A549 (cell line): ENCODE measurements at regions of chr1 and their contacts with region 1.

Region 1: GRCh38 chr1:151340870-151341754 is 5.9 kb downstream of the RFX5 start:
- DNase-seq: peak; percentile 60 to 84
- ATAC-seq: peak; percentile 87 to 93
- H3K4me3 ChIP-seq: no peak overlapping the region
- H3K27ac ChIP-seq: no peak overlapping the region
- H3K4me1 ChIP-seq: peaks cover 9% of the 10 kb centered on the region
- CTCF ChIP-seq: peak; percentile 87
- EP300 ChIP-seq: no peak
- POLR2A ChIP-seq: no peak
- RAD21 ChIP-seq: peak; percentile 84 to 87

Region 2: DNA sequence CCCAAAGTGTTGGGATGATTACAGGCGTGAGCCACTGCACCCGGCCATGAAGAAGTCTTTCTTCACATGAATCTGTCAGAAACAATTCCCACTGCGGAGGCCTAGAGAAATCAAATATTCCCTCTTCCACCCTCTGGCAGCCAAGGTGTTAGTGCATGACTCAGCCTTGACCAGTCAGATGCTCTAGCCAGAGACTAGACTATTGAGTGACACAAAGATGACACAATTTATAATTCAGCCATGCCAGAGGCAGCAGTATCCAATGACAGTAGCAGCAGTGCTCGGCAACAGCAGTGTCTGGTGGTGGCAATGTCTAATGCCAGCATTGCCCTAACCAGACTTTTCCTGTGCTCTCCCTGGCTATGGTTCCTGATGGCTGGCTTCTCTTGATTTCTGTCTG is 445.5 kb before region 1 on chr1:
- CTCF ChIA-PET with region 1: no interaction called
- POLR2A ChIA-PET with region 1: no interaction called
- DNase-seq: peak; percentile 56 to 61
- ATAC-seq: peak; percentile 92 to 100
- H3K4me3 ChIP-seq: no peak overlapping the region
- H3K27ac ChIP-seq: peak overlapping the region in 1 of 2 experiments; percentile 15; a peak in 1 of 6 replicates
- H3K4me1 ChIP-seq: peaks cover 9% of the 10 kb centered on the region
- CTCF ChIP-seq: no peak
- EP300 ChIP-seq: no peak
- POLR2A ChIP-seq: no peak
- RAD21 ChIP-seq: no peak

Region 3: DNA sequence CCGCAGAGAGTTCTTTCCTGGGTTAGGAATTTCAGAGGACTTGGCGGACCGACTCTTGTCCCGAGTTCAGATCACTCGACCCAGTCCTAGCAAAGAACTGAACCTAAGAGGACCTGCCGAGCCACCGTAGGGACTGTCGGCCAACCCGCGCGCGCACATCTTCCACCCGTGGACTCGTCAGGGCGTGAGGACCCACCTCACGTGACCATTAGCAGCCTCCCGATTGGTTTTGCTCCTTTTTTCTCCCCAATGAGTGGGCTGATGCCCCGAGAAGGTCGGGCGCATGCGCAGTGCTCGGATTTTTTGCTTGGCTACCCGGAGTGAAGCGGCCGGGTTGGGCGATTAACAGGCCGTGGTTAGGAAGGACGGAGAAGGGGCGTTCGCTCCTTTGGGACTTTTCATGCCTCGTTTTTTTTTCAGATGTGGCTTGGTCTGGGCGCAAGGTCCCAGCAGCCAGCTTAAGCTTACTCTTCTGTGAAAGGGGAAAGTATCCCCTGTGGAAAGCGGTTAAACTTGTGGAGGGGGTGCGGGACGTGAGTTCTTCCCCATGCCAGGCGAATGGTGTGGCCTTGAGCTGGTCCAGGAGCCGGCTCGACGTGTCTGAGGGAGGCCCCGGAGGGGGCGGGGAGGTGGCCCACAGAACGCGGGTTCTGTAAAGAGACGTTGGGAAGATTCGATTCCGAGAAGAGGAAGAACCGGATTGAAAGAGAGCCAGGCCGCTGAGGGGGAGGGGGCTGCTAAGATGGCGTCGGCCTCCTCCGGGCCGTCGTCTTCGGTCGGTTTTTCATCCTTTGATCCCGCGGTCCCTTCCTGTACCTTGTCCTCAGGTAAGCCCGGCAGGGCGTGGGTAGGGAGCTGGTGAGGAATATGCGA is 142.6 kb before region 1 on chr1 and contains the start of gene PIP5K1A:
- CTCF ChIA-PET with region 1: interaction called, 20 read pairs
- POLR2A ChIA-PET with region 1: no interaction called
- DNase-seq: peak; percentile 98 to 99
- ATAC-seq: peak; percentile 79 to 81
- H3K4me3 ChIP-seq: peak within 1 kb of the TSS; percentile 78
- H3K27ac ChIP-seq: peak within 1 kb of the TSS; percentile 95
- H3K4me1 ChIP-seq: peaks cover 30% of the 10 kb centered on the region
- CTCF ChIP-seq: no peak
- EP300 ChIP-seq: no peak
- POLR2A ChIP-seq: peak; percentile 72
- RAD21 ChIP-seq: no peak
- polyA plus RNA-seq, gene PIP5K1A: 129 and 183 TPM in 2 replicates

Region 4: DNA sequence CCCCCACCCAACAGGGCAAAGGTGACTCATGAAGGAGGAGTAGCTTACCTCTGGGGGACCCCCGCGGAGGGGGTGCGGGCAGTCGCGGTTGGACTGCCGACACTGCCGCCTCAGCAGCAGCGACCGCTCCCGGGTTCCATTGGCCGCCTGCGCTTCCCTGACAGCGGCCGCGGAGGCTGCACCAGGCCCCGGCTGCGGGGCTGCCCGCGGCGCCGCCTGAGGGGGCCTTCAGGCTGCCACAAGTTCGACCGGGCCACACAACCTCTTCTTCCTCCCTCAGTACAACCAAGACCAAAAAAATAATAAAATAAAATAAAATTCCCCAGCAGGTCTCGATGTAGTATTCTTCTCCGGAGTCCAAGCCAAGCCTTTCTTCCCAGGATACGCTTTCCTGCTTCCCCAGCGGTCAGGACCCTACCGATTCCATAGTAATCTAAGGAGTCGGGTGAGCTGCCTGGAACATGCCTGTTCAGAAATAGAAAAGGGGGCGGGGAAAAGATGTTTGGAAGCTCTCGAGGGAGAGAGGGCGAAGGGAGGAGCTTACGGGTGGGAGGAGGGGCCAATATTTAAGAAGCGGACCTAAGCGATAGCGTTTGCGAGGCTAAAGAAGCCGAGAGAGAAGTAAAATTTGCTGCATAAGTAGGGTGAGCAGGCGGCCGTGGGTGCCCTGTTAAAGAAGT is 13.7 kb before region 1 on chr1 and contains the start of gene PI4KB:
- CTCF ChIA-PET with region 1: interaction called, 831 read pairs
- POLR2A ChIA-PET with region 1: interaction called, 9 read pairs
- DNase-seq: peak; percentile 98 to 99
- ATAC-seq: peak; percentile 96 to 98
- H3K4me3 ChIP-seq: peak within 1 kb of the TSS; percentile 84
- H3K27ac ChIP-seq: peak within 1 kb of the TSS; percentile 92 to 95
- H3K4me1 ChIP-seq: peaks cover 17% of the 10 kb centered on the region
- CTCF ChIP-seq: no peak
- EP300 ChIP-seq: no peak
- POLR2A ChIP-seq: peak; percentile 60
- RAD21 ChIP-seq: 0 out of 5 replicates have a peak, but pooled peaks of 1 of the 2 experiments have one; percentile 2
- polyA plus RNA-seq, gene PI4KB: 34.4 and 37.7 TPM in 2 replicates

Region 5: DNA sequence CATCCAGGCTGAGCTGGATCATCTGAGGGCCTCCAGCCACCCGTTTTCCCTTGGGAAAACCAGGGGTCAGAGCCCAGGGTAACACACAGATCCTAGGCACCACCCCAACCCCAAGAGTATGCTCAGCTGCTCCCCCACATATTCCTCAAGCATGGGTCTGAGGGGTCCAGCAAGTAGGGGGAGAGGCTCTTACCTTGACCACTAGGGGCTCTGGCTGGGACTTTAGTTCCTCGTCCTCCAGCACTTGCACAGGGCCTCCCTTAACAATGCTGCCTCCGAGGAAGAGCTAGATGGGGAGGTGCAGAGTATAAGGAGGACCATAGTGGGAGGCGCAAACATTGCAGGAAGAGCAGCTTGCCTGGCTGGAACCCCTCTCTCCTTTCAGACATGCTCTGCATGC is 23.9 kb after region 1 on chr1:
- CTCF ChIA-PET with region 1: interaction called, 108 read pairs
- POLR2A ChIA-PET with region 1: no interaction called
- DNase-seq: no peak
- ATAC-seq: peak in 1 of 2 experiments; percentile 48; a peak in 2 of 6 replicates
- H3K4me3 ChIP-seq: no peak overlapping the region
- H3K27ac ChIP-seq: no peak overlapping the region
- H3K4me1 ChIP-seq: peaks cover under 1% of the 10 kb centered on the region; the same call in 2 of the 3 replicates
- CTCF ChIP-seq: no peak
- EP300 ChIP-seq: no peak
- POLR2A ChIP-seq: no peak
- RAD21 ChIP-seq: no peak

Region 6: GRCh38 chr1:151384584-151384983 is 43.5 kb after region 1 on chr1:
- CTCF ChIA-PET with region 1: interaction called, 11 read pairs
- POLR2A ChIA-PET with region 1: no interaction called
- DNase-seq: no peak
- ATAC-seq: peak in 1 of 2 experiments; percentile 64; a peak in 3 of 6 replicates
- H3K4me3 ChIP-seq: no peak overlapping the region
- H3K27ac ChIP-seq: no peak overlapping the region
- H3K4me1 ChIP-seq: no peaks in the 10 kb centered on the region
- CTCF ChIP-seq: no peak
- EP300 ChIP-seq: no peak
- POLR2A ChIP-seq: no peak
- RAD21 ChIP-seq: no peak